PC-3 (cell line): ENCODE measurements at regions of chr6 and their contacts with region 1.

Region 1: DNA sequence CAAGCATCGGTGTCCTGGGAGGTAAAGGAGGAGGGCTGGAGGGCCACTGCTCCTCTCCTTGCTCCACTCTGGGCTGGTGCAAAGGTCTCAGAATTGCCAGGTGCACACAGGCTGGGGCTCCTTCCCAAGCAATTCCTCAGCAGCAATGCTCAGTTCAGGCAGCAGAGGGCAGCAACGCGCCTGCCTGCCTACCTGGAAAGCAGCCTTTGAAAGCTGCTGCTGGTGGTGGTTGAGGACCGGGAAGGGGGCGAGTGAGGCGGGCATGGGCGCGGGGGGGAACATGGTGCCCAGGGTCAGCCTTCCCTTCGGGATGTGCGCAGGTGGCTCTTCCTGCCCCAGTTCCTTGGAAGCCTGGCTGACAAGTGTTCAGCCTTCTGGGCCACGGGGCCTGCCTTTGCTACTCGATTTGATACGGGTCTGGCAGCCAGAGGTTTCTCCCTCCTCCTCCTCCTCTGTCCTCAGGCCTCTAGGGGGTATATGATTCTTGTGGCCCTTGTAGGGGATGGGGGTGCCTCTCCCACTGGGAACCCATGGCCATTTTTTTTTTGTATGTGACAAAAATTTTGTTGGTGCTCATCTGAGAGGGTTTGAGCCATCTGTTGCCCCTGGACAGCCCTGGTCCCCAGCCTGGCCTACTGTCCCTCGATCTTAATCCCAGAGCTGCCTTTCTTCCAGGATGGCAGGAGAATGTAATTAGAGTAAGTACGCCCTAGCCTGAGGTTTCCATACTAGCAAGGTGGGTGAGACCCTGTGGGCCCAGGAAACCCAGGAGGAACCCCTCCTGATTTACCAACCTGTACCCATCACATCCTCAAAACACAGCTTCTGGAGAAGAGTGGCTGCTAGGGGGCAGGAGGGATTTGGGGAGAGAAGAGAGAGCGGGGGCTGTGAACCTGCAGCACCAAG is 20.1 kb downstream of the MRPS18A start:
- DNase-seq: peak; percentile 93
- ATAC-seq: peak; percentile 57
- H3K4me3 ChIP-seq: no peak overlapping the region; the same call in 1 of the 2 replicates
- H3K27ac ChIP-seq: no peak overlapping the region
- H3K4me1 ChIP-seq: peaks cover 46% of the 10 kb centered on the region
- H3K27me3 ChIP-seq: no peaks in the 10 kb centered on the region
- CTCF ChIP-seq: peak; percentile 92

Region 2: DNA sequence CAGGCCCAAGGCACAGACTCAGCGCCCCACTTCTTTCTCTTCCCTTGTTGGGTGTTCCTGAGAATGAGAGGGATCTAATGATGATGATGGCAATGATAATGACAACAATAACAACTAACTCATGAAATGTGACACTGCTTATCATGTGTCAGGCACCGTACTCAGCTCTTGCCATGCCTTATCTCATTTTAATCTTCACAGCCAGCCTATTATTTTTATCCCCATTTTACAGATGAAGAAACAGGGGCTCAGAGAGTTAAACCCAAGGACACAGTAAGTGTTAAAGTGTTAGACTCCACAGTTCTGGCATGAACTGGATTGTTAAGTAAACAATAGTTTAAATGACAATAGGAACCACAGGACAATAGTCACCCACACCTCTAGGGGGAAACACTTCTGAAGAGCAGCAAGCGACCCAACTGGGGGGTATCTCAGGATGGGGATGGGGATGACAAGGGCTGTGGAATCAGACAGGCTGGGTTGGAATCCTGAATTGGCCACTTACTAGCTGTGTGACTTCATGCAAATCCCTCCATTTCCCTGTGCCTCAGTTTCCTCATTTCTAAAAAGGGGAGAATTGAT is 10.2 kb before region 1 on chr6:
- CTCF ChIA-PET with region 1: interaction called, 10 read pairs
- POLR2A ChIA-PET with region 1: no interaction called
- intact Hi-C with region 1: no loop called
- DNase-seq: no peak
- ATAC-seq: no peak
- H3K4me3 ChIP-seq: no peak overlapping the region
- H3K27ac ChIP-seq: no peak overlapping the region
- H3K4me1 ChIP-seq: no peaks in the 10 kb centered on the region
- H3K27me3 ChIP-seq: no peaks in the 10 kb centered on the region
- CTCF ChIP-seq: no peak

Region 3: DNA sequence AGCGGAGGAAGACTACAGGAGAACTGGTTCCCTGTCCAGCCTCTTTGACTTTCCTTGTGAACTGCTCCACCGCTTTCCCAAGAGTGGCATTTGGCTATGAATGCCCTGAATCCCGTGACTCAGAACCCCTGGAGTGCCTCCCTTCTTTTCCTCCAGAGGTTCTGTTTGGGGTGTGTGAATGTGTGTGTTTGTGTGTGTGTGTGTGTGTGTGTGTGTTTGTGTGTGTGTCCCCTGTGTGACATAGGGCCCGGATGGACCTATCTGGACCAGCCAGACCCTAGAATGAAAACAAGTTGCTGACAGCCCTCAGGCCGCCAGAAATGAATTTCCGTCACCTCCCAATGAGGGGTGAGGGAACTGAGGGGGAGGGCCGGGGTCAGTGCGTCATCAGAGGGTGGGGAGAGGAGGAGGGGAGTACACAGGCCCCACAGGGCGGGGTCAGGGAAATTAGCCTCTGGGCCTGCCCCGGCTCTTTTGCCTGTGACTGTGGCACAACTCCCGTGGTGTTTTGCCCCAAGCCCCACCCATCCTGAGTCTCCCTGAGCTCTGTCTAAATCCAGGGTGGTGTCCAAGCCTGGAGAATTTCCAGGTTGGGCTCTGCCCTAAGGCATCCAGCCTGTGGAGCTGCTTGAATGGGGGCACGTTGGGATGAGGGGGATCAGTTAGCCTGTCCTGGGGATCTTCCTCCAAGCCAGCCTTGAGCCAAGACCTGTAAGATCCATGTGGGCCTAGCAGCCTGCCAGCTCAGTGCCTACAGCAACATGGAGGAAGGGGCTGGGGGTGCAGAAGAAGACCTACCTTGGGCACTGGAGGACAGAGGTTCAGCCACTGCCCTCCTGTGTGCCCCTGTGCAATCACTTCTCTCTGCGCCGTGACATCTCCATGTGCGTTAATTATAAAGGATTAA is 35.3 kb after region 1 on chr6:
- CTCF ChIA-PET with region 1: interaction called, 6 read pairs
- POLR2A ChIA-PET with region 1: no interaction called
- intact Hi-C with region 1: loop called (anchors 2 kb)
- DNase-seq: peak; percentile 93
- ATAC-seq: peak; percentile 60
- H3K4me3 ChIP-seq: peak overlapping the region; percentile 16; the same call in 1 of the 2 replicates
- H3K27ac ChIP-seq: peak overlapping the region; percentile 77
- H3K4me1 ChIP-seq: peaks cover 54% of the 10 kb centered on the region
- H3K27me3 ChIP-seq: no peaks in the 10 kb centered on the region
- CTCF ChIP-seq: no peak

Region 4: DNA sequence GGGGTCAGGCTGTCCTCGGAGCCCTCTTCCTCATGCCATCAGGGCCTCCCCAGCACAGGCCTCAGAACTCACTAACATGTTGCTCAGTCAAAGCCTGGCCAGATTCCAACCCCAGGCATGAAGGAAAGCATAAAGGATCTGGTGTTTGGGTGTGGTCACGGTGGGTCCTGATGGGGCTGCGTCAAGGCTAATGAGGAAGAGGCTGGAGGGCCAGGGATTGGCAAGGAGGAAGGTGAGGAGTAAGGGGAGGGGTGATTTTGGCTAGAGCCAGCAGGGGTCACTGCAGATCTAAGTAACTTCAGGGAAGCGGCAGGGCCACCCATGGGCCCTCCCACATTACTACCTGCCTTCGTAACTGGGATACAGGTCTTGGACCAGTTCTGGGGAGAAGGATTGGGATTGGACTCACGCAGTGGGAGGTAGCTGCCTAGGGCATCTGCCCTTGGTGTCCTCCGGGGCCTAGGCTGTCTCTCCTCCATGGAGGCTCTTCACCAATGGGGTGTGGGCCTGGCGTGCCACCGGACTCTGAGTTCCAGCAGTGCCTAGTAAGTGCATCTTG is 56.3 kb after region 1 on chr6:
- CTCF ChIA-PET with region 1: no interaction called
- POLR2A ChIA-PET with region 1: no interaction called
- intact Hi-C with region 1: loop called (anchors 10 kb)
- DNase-seq: peak; percentile 91
- ATAC-seq: peak; percentile 79
- H3K4me3 ChIP-seq: no peak overlapping the region
- H3K27ac ChIP-seq: no peak overlapping the region
- H3K4me1 ChIP-seq: peaks cover 30% of the 10 kb centered on the region
- H3K27me3 ChIP-seq: no peaks in the 10 kb centered on the region
- CTCF ChIP-seq: peak; percentile 80

Region 5: DNA sequence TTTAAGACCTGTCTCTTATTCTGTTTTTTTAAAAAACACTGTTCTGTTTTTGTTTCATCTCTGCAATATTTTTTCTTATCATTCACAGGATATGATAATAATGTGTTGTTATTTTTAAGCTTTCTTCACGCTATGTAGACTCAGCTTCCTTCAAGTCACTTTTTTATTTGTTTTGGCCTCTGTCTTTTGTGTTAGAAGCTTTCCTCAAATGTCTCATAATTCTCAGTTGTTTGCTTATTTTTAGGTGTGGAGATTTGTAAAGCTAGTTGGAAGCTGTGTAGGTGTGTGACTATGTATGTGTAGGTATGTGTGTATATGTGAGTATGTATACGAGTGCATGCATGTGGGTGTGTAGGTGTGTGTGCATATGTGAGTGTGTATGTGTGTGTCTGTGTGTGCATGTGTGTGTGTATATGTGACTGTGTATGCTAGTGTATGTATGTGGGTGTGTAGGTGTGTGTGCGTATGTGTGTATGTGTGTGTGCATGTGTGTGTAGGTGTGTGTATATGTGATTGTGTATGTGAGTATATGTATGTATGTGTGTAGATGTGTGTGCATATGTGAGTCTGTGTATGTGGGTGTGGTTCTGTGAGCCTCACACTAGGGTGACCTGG is 86.2 kb after region 1 on chr6:
- CTCF ChIA-PET with region 1: no interaction called
- POLR2A ChIA-PET with region 1: no interaction called
- intact Hi-C with region 1: loop called (anchors 5 kb)
- DNase-seq: no peak
- ATAC-seq: no peak
- H3K4me3 ChIP-seq: no peak overlapping the region
- H3K27ac ChIP-seq: no peak overlapping the region
- H3K4me1 ChIP-seq: no peaks in the 10 kb centered on the region
- H3K27me3 ChIP-seq: no peaks in the 10 kb centered on the region
- CTCF ChIP-seq: no peak